ENCODE measurements at regions of chr17 and their contacts with region 1.

Region 1: DNA sequence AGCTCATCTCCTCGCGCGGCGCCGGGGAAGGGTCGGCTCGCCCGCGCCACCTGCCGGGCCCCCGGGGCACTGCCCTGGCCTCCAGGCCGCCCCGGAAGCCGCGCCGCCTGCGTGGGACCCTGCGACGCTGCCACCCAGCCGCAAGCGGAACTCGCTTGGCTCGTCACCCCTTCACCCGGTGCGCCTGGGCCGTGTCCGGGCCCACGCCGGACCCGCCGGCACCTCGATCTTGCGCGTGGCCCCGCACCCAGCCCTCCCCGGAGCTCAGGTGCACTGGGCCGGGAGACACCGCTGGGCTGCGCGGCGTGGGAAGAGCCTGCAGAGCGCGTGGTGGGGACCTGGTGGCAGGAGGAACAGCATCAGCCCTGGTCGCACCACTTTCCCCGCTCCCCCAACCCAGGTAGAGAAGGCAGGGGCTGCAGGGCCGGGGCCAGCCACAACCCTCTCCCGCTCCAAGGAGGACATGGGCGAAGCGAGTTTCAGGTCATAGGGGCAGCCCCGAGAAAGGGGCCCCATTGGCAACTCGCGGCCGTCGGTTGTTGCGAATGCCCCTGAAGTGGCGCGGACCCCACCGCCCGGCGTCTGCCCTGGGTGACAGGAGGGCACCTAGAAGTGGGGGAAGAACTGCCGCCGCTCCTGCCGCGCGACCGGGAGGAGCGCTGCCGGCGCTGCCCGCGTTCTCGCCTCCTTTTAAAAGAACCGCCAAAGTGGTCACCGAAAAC is 363 bp upstream of the MIF4GD start:
- DNase-seq: peak; percentile 90
- ATAC-seq: peak; percentile 87
- H3K4me3 Mint-ChIP-seq: peak overlapping the region; percentile 86
- H3K27ac Mint-ChIP-seq: peak overlapping the region; percentile 86
- H3K4me1 Mint-ChIP-seq: peaks cover 37% of the 10 kb centered on the region
- H3K27me3 Mint-ChIP-seq: no peaks in the 10 kb centered on the region

Region 2: GRCh38 chr17:75205037-75205792 is 66.2 kb before region 1 on chr17 and contains the start of gene NUP85:
- CTCF ChIA-PET with region 1: interaction called, 11 read pairs
- DNase-seq: peak; percentile 93
- ATAC-seq: peak; percentile 90
- H3K4me3 Mint-ChIP-seq: peak within 1 kb of the TSS; percentile 95
- H3K27ac Mint-ChIP-seq: peak within 1 kb of the TSS; percentile 96
- H3K4me1 Mint-ChIP-seq: peaks cover 28% of the 10 kb centered on the region
- H3K27me3 Mint-ChIP-seq: no peaks in the 10 kb centered on the region
- total RNA-seq, gene NUP85: 164 to 176 TPM

Region 3: DNA sequence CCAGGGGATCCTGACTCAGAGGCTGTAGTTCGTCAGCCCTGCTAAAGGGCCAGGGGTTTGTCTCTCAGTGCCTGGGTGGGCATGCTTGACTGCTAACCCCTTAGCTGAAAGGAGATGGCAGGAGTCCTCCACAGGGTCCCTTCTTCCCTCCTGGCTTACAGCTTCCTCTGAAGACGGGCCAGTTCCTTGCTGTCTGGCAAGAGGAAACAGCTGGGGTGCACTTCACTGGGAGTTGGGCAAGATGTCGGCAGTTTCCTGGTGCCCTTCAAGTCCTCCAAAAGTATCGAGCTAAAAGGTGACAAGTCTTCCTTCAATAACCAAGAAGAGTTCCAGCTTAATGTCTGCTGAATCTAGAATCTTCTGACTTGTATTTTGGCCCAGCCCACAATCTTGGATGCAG is 42.6 kb before region 1 on chr17:
- CTCF ChIA-PET with region 1: no interaction called
- DNase-seq: no peak
- ATAC-seq: no peak
- H3K4me3 Mint-ChIP-seq: no peak overlapping the region
- H3K27ac Mint-ChIP-seq: no peak overlapping the region
- H3K4me1 Mint-ChIP-seq: no peaks in the 10 kb centered on the region
- H3K27me3 Mint-ChIP-seq: no peaks in the 10 kb centered on the region

Region 4: GRCh38 chr17:75250009-75250471 is 21.4 kb before region 1 on chr17:
- CTCF ChIA-PET with region 1: interaction called, 25 read pairs
- DNase-seq: peak; percentile 85
- ATAC-seq: peak; percentile 98
- H3K4me3 Mint-ChIP-seq: peak overlapping the region; percentile 75
- H3K27ac Mint-ChIP-seq: peak overlapping the region; percentile 90
- H3K4me1 Mint-ChIP-seq: peaks cover 28% of the 10 kb centered on the region
- H3K27me3 Mint-ChIP-seq: no peaks in the 10 kb centered on the region

Region 5: GRCh38 chr17:75295201-75296158 is 24.1 kb after region 1 on chr17:
- CTCF ChIA-PET with region 1: interaction called, 86 read pairs
- DNase-seq: peak; percentile 47
- ATAC-seq: peak; percentile 45
- H3K4me3 Mint-ChIP-seq: peak overlapping the region; percentile 41
- H3K27ac Mint-ChIP-seq: peak overlapping the region; percentile 81
- H3K4me1 Mint-ChIP-seq: peaks cover 30% of the 10 kb centered on the region
- H3K27me3 Mint-ChIP-seq: no peaks in the 10 kb centered on the region

Region 6: GRCh38 chr17:75364078-75364477 is 92.7 kb after region 1 on chr17:
- CTCF ChIA-PET with region 1: no interaction called
- DNase-seq: no peak
- ATAC-seq: no peak
- H3K4me3 Mint-ChIP-seq: no peak overlapping the region
- H3K27ac Mint-ChIP-seq: no peak overlapping the region
- H3K4me1 Mint-ChIP-seq: peaks cover 82% of the 10 kb centered on the region
- H3K27me3 Mint-ChIP-seq: no peaks in the 10 kb centered on the region

Region 7: GRCh38 chr17:75412455-75413317 is 141.3 kb after region 1 on chr17:
- CTCF ChIA-PET with region 1: interaction called, 36 read pairs
- DNase-seq: peak; percentile 83
- ATAC-seq: peak; percentile 90
- H3K4me3 Mint-ChIP-seq: peak overlapping the region; percentile 31
- H3K27ac Mint-ChIP-seq: peak overlapping the region; percentile 66
- H3K4me1 Mint-ChIP-seq: peaks cover 27% of the 10 kb centered on the region
- H3K27me3 Mint-ChIP-seq: peaks cover 16% of the 10 kb centered on the region

Measured in activated CD8-positive, alpha-beta memory T cell treated with anti-CD3 and anti-CD28 coated beads, Interleukin-2, amount 10 ng/mL, durations not matched to agents 7 days and 5 days (primary cell).